G401 (cell line): ENCODE measurements at regions of chr12 and their contacts with region 1.

Region 1: DNA sequence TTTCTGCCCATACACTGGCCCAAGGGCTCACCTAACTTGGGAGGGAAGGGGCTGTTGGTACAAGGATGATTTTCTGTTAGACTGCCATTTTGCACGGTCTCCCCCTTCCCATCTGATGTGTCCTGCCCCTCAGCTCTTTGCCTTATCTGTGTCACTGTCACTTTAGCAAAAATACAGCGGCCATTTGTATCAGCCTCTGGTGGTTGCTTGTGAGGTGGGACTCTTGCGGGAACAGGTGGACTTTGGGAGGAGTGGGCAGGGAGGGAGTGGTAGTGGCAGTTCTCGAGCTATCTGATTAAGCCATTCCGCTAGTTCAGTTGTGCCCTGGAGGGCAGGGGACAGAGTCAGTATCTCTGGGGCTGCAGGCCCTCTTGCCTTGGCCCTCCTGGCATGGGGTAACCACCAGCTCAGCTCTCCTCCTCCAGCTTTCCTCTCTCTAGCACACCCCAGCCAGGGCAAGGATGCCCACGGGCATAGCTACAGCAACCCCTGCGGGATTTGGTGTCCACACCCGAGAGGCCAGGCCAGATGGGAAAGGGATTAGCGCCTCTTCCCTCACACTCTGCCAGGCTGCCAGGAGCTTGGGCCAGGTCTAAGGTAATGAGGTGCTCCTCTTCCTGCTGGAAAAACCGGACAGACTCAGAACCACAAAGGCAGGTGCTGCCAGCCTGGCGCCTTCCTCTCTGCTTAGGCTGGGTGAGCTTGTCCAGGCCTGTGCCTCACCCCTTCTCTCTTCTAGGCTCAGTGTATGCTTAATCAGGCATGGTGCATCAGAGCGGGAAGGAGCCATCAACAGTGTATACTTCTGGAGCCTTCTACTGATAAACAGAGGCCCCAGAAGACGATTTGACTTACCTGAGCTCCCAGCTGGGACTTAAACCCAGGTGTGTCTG is 8.7 kb downstream of the SLC48A1 start:
- DNase-seq: peak; percentile 69

Region 2: GRCh38 chr12:47736877-47737676 is 44.6 kb before region 1 on chr12:
- in situ Hi-C with region 1: loop called (anchors 10 kb)
- DNase-seq: peak; percentile 20